CD14-positive monocyte (primary cell): ENCODE measurements at regions of chr5 and their contacts with region 1.

Region 1: GRCh38 chr5:14168144-14168792 is 25.1 kb downstream of the TRIO start:
- DNase-seq: peak; percentile 47 to 57 (median 54)
- H3K4me3 ChIP-seq: peak overlapping the region in 1 of 3 experiments; percentile 57
- H3K4me3 Mint-ChIP-seq: peak overlapping the region; percentile 34 to 72
- H3K27ac ChIP-seq: peak overlapping the region in 1 of 2 donors; percentile 74
- H3K27ac Mint-ChIP-seq: peak overlapping the region in 6 of 7 donors; percentile 72 to 88 (median 80)
- H3K4me1 ChIP-seq: peaks cover 55 to 65% of the 10 kb centered on the region in 2 donors
- H3K4me1 Mint-ChIP-seq: peaks cover 73% of the 10 kb centered on the region
- H3K27me3 ChIP-seq: no peaks in the 10 kb centered on the region
- H3K27me3 Mint-ChIP-seq: no peaks in the 10 kb centered on the region
- CTCF ChIP-seq: no peak

Region 2: GRCh38 chr5:14142827-14143548 is 25.3 kb before region 1 on chr5 and contains the start of gene TRIO:
- intact Hi-C with region 1: no loop called
- DNase-seq: peak; percentile 71 to 75 (median 71)
- H3K4me3 ChIP-seq: peak within 1 kb of the TSS; percentile 75 to 91 (median 86)
- H3K4me3 Mint-ChIP-seq: peak within 1 kb of the TSS; percentile 91 to 92
- H3K27ac ChIP-seq: peak within 1 kb of the TSS; percentile 54 to 85
- H3K27ac Mint-ChIP-seq: peak within 1 kb of the TSS; percentile 69 to 95 (median 92)
- H3K4me1 ChIP-seq: peaks cover 19 to 32% of the 10 kb centered on the region in 2 donors
- H3K4me1 Mint-ChIP-seq: peaks cover 27% of the 10 kb centered on the region
- H3K27me3 ChIP-seq: peaks cover 0 to 6% of the 10 kb centered on the region in 2 donors
- H3K27me3 Mint-ChIP-seq: peaks cover 4 to 15% (median 9%) of the 10 kb centered on the region in 3 donors
- CTCF ChIP-seq: peak; percentile 45
- polyA plus RNA-seq, gene TRIO: 1.7 to 45.8 (median 2.1) TPM

Region 3: DNA sequence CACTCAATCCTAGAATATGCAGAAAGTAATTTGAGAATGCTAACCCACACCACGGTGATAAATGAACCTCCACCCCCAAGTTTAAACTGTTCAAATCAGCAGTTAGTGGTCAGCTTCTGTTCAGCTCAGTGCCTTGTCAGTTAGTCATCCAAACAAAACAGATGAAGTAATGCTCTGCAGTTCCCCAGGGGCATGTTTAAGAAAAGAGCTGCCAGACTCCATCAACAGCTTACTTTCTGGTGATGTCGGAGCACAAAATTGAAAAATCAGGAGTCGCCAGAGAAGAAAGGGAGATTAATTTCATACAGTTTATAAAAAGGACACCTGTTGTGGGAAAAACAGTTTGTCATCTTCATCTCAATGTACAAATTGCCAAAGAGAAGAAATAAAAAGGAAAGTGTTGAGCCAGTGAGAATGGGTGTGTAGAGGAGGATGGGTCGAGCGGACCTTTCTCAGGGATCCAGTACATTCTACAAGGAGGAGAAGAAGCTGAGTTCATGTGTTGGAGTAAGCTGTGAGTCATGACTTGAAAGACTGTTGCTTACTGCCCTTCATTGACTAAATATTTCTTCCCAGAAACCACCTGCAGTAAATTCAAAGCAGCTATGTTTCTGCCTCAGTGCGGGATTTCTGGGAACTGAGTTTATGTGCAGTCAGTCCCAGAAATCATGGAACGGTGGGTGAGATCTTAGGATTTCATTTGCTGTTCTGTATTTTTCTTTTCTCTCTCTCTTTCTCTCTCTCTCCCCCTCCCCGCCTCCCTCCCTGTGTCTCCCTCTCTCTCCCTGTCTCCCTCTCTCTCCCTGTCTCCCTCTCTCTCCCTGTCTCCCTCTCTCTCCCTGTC is 11.4 kb before region 1 on chr5:
- intact Hi-C with region 1: loop called in 1 of 2 experiments (anchors 2 kb)
- DNase-seq: peak in 2 of 3 donors; percentile 27 to 47
- H3K4me3 ChIP-seq: no peak overlapping the region
- H3K4me3 Mint-ChIP-seq: no peak overlapping the region
- H3K27ac ChIP-seq: peak overlapping the region in 1 of 2 donors; percentile 38
- H3K27ac Mint-ChIP-seq: no peak overlapping the region
- H3K4me1 ChIP-seq: peaks cover 39 to 42% of the 10 kb centered on the region in 2 donors
- H3K4me1 Mint-ChIP-seq: peaks cover 14% of the 10 kb centered on the region
- H3K27me3 ChIP-seq: no peaks in the 10 kb centered on the region
- H3K27me3 Mint-ChIP-seq: no peaks in the 10 kb centered on the region
- CTCF ChIP-seq: no peak

Region 4: GRCh38 chr5:14208071-14209021 is 40.1 kb after region 1 on chr5:
- intact Hi-C with region 1: loop called in 1 of 2 experiments (anchors 5 kb)
- DNase-seq: peak; percentile 67 to 73 (median 68)
- H3K4me3 ChIP-seq: no peak overlapping the region
- H3K4me3 Mint-ChIP-seq: no peak overlapping the region
- H3K27ac ChIP-seq: peak overlapping the region in 1 of 2 donors; percentile 68
- H3K27ac Mint-ChIP-seq: peak overlapping the region in 5 of 7 donors; percentile 5 to 87 (median 73)
- H3K4me1 ChIP-seq: peaks cover 32 to 57% of the 10 kb centered on the region in 2 donors
- H3K4me1 Mint-ChIP-seq: peaks cover 71% of the 10 kb centered on the region
- H3K27me3 ChIP-seq: no peaks in the 10 kb centered on the region
- H3K27me3 Mint-ChIP-seq: peaks cover 0 to 4% (median 0%) of the 10 kb centered on the region in 3 donors
- CTCF ChIP-seq: peak; percentile 24